Testis (tissue), 5 donors: ENCODE measurements at regions of chr1 and their contacts with region 1.

Region 1: DNA sequence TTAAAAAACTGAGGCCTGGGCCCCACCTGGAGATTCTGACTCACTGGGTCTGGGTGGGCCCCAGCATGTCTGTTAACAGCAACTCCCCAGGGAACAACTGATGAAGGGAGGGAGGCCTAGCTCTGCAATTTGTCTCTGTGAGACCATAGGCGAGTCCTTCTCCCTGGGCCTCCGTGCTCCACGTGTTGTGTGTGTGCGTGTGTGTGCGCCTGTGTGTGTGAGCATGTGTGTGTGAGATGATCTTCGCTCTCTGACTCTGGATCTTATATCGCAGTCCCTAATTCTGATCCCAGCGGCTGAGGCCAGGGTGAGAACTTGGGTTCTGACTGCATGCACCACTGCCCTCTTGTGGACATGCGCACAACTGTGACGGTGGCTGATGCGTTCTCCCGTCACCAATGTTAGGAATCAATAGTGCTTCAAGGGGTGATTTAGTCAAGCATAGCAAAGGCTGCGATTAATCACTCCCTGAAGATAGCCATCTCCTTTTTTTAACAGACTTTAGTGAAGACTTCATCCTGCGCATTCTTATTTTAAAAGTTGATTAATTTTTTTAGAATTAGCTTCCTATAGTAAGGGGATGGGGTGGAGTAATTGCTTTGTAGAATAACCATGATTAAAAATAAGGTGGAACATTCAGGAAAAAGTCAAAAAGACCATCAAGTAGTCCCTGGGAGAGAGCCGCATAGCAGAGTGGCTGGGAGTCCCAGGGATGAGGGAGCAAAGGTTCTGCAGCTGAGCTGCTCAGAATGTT is 62.4 kb upstream of the USP24 start:
- DNase-seq: peak; percentile 86
- H3K4me3 ChIP-seq: no peak overlapping the region
- H3K27ac ChIP-seq: peak overlapping the region in 1 of 2 donors; percentile 71
- H3K4me1 ChIP-seq: no peaks in the 10 kb centered on the region
- H3K27me3 ChIP-seq: no peaks in the 10 kb centered on the region
- CTCF ChIP-seq: peak; percentile 67 to 89 (median 76)
- POLR2A ChIP-seq: no peak

Region 2: DNA sequence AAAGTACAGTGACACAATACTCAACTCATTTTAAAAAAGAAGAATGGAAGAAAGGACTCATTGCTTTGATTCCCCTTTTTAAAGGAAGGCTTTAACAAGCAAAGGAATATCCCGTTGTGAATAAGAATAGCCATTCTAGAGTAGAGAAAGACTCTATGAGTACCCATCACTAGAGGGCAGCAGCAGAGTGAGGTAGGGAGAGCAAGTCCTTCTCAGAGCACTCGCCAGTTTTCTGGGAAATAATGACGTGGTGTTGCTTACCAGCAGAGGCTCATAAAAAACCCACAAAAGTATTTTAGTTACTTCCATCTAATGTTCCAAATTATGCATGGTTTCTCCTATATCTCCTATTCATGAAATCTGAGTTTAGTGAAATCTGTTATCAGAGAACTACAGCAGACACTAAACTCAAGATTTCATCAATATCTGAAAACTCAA is 137.0 kb before region 1 on chr1:
- intact Hi-C with region 1: loop called (anchors 5 kb)
- DNase-seq: peak; percentile 82
- H3K4me3 ChIP-seq: no peak overlapping the region
- H3K27ac ChIP-seq: no peak overlapping the region
- H3K4me1 ChIP-seq: no peaks in the 10 kb centered on the region
- H3K27me3 ChIP-seq: no peaks in the 10 kb centered on the region
- CTCF ChIP-seq: peak; percentile 52 to 72 (median 64)
- POLR2A ChIP-seq: no peak

Region 3: DNA sequence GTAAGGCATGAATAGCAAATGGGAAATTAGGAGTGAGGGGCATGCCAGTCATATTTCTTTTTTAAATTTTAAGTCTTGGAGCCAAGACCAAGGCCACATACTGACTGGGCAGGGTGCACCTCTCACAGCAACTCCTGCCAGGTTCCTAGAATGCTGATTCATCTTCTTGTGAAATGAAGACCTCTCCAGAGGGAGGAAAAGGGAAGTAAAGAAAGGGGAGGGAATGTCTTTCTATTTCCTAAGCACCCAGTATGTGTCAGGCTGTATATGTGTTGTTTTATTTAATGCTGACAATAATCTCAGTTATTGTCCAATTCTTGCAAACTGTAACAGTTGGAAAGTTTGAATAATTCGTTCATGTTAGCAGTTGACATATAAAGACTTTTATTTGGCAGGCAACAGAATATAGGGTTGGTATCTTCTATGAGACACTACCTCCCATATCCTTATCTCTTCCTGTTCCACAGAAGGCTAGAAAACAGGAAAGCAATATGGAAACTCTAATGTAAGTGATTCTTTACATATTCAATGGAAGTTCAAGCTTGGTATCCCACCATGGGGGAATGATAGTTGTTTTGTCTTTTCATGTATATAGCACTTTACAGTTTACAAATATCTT is 196.7 kb after region 1 on chr1:
- intact Hi-C with region 1: no loop called
- DNase-seq: no peak
- H3K4me3 ChIP-seq: no peak overlapping the region
- H3K27ac ChIP-seq: no peak overlapping the region
- H3K4me1 ChIP-seq: no peaks in the 10 kb centered on the region
- H3K27me3 ChIP-seq: no peaks in the 10 kb centered on the region
- CTCF ChIP-seq: no peak
- POLR2A ChIP-seq: no peak